ENCODE measurements at regions of chrX and their contacts with region 1.

Region 1: DNA sequence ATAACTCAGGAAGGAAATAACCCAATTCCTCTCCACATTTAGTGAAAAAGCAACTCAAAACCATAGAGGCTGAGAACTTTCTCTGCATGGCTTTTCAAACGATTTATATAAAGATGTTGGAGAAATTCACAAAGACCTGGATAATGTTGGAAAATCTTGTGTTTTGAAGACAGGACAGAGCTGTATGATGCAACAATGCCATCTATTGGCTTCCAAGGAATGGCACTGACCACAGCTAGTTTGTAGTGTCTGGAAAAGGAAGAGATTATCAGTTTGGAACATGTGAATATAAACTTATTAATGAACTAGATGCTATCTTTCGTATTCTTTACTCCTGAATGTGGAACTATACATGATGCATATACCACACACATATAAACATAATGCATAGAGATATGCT is 503.6 kb downstream of the IL1RAPL1 start:
- DNase-seq: no peak
- ATAC-seq: peak; percentile 59

Region 2: DNA sequence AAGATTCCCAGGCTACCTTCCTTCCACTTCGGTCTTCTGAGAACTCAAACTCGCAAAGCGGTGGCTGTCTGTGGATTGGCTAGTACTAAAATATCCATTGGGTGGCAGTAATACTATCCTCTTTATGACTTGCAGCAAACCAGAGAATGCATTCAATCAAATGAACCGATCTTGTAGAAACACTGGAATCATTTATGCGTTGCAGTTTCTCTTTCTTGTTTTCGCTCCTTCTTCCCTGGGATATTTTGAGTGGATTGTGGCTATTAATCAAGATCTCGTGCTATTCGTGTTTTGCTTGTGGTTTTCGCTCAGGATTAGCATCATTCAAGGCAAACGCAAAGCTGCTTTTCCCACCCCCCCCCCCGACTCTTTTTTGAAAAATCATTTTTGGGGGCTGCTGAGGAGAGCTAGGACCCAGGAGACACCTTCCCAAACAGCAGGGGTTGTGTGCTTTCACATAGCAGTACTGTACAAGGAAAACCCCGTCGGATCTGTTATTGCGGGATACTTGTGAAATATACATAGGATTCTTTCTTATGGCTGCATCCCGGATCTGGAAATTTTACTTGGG is 503.7 kb before region 1 on chrX and contains the start of gene IL1RAPL1:
- intact Hi-C with region 1: loop called (anchors 10 kb)
- DNase-seq: no peak
- ATAC-seq: peak; percentile 84
- total RNA-seq, gene IL1RAPL1: 3.1 TPM

Region 3: GRCh38 chrX:29388509-29388908 is 297.7 kb after region 1 on chrX:
- intact Hi-C with region 1: no loop called
- DNase-seq: no peak
- ATAC-seq: no peak

Measured in Right ventricle myocardium superior (tissue), 1 donor.